ENCODE measurements at regions of chr12 and their contacts with region 1.

Region 1: DNA sequence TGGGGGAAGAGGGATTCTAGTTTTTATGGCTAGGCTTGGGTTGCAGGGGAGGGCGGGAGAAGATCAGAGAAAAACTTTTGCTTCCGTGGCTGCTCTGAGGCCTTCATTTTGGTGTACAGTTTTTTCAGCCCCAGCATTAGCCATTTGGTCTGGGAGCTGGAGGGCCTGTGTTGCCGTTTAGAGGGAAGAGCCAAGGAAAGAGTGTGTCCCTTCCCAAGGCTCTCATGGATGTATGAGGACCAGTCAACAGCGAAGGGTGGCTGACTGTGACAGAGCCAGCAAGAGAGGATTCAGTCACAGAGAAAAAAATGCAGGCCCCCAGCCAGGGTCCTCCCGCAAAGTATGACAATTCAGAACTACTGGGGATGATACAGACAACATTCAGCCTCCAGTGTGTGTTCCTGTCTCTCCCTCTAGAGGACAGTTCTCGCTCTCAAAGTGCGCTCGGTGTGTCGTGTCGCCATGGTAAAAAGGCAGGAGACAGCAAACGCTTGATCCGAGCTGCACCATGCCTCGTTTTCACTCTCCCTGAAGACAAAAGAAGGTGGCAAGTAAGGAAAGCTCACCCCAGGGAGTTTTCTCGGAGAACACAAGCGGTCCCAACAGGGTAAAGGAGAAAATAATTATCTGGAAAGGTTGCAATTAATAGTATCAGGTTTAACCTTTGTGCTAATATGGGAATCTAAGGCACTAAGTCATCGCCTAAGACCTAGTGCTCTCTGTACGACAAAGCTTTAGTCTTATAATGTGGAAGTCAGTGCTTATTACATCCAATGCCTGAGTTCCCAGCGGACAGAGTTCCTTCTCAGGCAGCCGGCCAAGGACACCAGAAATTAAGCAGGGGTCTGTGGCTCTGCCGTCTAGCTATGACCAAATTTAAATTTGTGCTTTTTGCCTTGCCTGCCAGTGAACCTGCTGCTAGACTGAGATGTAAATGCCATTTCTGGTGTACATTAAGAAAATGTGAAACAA is 157.3 kb upstream of the PLXNC1 start:
- DNase-seq: no peak
- H3K4me3 ChIP-seq: no peak overlapping the region
- H3K27ac ChIP-seq: peak overlapping the region; percentile 1 to 18
- H3K4me1 ChIP-seq: peaks cover 0 to 3% of the 10 kb centered on the region in 2 donors
- H3K27me3 ChIP-seq: no peaks in the 10 kb centered on the region
- CTCF ChIP-seq: peak in 2 of 3 experiments; percentile 5 to 31

Region 2: GRCh38 chr12:93957870-93958269 is 33.2 kb before region 1 on chr12:
- intact Hi-C with region 1: loop called (anchors 1 kb)
- DNase-seq: no peak
- H3K4me3 ChIP-seq: no peak overlapping the region
- H3K27ac ChIP-seq: no peak overlapping the region
- H3K4me1 ChIP-seq: no peaks in the 10 kb centered on the region
- H3K27me3 ChIP-seq: no peaks in the 10 kb centered on the region
- CTCF ChIP-seq: no peak

Measured in ascending aorta (tissue), 2 donors.